Activated naive CD4-positive, alpha-beta T cell treated with anti-CD3 and anti-CD28 coated beads for 36 hours (primary cell): ENCODE measurements at regions of chr19 and their contacts with region 1.

Region 1: GRCh38 chr19:16185123-16185767 is at the start of gene FAM32A:
- DNase-seq: peak; percentile 100
- H3K4me3 Mint-ChIP-seq: peak within 1 kb of the TSS; percentile 98
- H3K27ac Mint-ChIP-seq: peak within 1 kb of the TSS; percentile 95
- H3K4me1 Mint-ChIP-seq: peaks cover 32% of the 10 kb centered on the region
- H3K27me3 Mint-ChIP-seq: no peaks in the 10 kb centered on the region
- total RNA-seq, gene FAM32A: 38.2 to 41.9 TPM

Region 2: DNA sequence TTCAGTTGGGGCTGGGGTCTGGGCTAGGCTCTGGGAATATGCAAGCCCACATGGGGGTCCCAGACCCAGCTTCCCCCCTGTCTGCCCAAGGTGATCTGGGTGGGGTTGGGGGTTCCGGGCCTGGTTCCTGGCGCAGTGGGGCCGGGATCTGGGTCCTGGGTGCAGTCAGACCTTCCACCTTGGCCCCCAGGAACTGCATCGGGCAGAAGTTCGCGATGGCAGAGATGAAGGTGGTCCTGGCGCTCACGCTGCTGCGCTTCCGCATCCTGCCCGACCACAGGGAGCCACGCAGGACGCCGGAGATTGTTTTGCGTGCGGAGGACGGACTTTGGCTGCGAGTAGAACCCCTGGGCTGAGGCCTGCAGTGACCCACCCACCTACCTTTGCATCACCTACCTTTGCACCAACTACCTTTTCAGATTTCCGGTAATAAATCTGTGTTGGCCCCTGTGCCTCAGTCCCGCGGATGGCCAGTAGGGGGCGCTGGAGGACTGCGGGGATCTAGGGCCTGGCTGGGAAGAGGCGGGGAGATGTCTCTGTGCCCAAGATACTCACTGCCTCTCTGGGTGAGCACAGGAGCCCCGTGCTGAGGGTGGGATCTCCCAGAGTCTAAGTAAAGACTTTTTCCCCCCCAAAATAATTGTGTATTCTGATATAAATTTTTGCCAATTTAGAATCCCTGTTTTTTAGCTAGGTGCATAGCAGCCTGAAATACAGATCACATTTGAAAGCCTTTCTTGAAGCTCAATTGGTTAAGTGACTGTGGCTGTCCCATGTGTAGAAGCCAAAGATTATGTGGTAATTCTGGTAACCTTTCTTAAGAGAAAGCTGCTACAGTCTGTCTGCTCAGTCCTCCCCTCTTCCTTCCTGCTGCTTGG is 556.0 kb before region 1 on chr19:
- CTCF ChIA-PET with region 1: interaction called, 6 read pairs
- intact Hi-C with region 1: loop called (anchors 1 kb)
- DNase-seq: peak; percentile 93
- H3K4me3 Mint-ChIP-seq: no peak overlapping the region
- H3K27ac Mint-ChIP-seq: no peak overlapping the region
- H3K4me1 Mint-ChIP-seq: no peaks in the 10 kb centered on the region
- H3K27me3 Mint-ChIP-seq: peaks cover 6% of the 10 kb centered on the region

Region 3: DNA sequence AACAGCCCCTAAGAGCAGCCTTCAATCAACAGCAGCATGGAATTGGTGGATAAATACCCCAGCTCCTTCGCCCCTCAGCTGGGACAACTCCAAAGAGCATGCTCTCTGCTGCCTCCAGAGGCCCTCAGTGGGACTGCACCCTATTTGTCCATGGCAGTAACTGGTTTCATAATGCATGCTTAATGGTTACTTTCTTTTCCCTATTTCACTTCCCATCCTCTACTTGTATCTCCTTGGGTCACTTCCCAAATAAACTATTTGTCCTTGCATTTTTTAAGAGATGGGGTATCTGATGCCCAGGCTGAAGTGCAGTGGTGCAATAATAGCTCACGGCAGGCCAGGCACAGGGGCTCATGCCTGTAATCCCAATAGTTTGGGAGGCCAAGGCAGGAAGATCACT is 122.5 kb before region 1 on chr19:
- CTCF ChIA-PET with region 1: interaction called, 12 read pairs
- intact Hi-C with region 1: loop called (anchors 1 kb)
- DNase-seq: peak; percentile 84
- H3K4me3 Mint-ChIP-seq: no peak overlapping the region
- H3K27ac Mint-ChIP-seq: no peak overlapping the region
- H3K4me1 Mint-ChIP-seq: peaks cover 20% of the 10 kb centered on the region
- H3K27me3 Mint-ChIP-seq: no peaks in the 10 kb centered on the region

Region 4: DNA sequence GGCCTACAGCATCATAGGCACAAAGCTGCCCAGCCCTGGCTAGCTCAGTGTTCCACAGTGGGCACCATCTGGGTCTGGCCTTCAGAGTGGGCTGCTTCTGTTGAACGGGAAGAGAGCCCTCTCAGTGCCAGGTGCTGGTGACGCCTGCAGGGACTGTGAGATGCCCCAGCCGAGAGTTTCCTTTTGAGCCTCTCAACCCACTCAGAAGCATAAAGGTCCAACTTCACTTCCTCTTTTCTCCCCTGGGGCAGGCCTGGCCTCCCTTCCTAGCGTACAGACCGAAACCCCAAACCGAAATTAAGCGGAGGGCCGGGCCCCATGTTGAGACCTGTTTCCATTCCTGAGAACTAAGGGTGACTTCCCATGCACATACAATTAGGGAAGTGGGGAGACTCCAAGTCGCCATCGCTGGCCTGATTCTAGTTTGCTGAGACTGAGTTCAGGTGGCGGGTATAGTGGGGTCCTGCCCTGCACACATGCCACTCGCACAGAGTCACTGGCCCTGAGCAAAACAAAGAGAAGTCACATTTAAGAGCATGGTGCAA is 66.7 kb before region 1 on chr19:
- CTCF ChIA-PET with region 1: interaction called, 10 read pairs
- intact Hi-C with region 1: no loop called
- DNase-seq: peak; percentile 45
- H3K4me3 Mint-ChIP-seq: no peak overlapping the region
- H3K27ac Mint-ChIP-seq: peak overlapping the region; percentile 82
- H3K4me1 Mint-ChIP-seq: peaks cover 54% of the 10 kb centered on the region
- H3K27me3 Mint-ChIP-seq: no peaks in the 10 kb centered on the region

Region 5: DNA sequence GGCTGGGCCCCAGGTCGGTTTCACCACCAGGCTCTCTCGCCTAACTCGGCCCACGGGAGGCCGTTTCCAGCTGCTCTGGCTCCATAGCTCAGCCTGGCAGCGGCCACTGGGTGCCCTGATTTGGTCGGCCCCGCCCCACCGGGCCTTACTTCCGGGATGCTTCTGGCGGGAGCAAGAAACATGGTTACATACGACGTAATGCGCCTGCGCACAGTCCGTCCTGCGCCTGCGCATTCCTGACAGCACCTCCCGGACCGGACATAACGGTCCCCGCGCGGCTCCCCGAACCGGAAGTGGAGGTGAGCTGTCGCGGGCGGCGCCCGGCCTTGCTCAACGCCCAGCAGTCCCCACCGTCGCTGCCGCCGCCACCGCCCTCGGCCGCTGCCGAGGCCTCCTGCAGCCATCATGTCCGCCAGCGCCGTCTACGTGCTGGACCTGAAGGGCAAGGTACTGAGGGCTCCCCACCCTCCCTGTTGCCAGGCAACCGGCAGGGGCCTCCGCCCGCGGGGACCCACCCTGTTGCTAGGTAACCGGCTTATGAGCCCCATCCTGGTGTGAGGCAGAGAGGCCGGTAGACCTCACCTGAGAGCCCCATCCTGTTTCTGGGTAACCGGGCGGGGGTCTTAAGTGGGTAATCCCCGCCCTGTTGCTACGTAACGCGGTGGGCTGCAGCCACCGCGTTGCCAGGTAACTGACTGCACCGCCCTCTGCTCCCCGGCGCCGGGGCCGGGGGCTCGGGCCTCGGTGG is 12.6 kb after region 1 on chr19 and contains the start of gene AP1M1:
- CTCF ChIA-PET with region 1: interaction called, 30 read pairs
- intact Hi-C with region 1: loop called (anchors 1 kb)
- DNase-seq: peak; percentile 99
- H3K4me3 Mint-ChIP-seq: peak within 1 kb of the TSS; percentile 93
- H3K27ac Mint-ChIP-seq: peak within 1 kb of the TSS; percentile 93
- H3K4me1 Mint-ChIP-seq: peaks cover 37% of the 10 kb centered on the region
- H3K27me3 Mint-ChIP-seq: no peaks in the 10 kb centered on the region
- total RNA-seq, gene AP1M1: 113 to 123 TPM

Region 6: DNA sequence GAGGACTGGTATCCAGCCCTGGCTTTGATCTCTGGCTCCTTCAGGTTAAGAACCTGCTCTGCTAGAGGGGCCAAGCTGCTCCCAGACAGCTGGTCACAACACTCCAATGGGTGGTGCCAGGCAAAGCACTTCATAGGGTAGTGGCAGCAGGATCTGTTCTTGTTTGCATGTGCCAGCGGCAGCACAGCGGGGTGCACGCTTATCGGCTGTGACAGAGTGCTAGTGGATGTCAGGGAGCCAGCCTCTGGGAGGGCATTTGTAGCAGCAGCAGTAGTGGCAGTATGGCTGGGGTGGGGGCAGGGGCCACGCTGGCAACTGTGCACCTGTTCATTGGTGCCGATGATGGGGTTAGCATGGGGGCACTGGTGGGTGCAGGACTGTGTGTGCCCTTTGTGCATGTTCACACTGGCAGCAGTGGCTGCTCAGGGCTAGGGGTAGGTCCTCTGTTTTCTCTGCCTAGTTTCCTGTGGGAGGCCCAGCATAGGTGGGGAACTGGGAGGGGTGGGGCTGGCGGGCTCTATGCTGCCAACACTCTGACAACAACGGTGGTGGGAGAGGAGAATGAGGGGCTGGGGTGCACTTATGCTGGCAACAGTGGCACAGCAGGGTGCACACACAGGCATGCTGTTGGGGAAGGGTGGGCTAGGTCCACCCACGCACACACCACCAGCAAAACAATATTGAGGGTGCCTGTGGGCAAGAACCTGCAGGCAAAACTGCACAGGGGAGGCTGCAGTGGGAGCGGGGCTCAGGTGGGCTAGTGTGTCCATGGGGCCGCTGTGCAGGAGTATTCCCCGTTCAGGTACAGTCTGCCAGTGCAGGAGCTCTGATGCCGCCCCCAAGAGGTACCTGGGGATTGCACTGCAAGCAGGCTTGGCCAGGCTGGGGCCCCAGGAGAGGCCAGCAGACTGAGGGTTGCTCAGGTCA is 31.8 kb after region 1 on chr19:
- CTCF ChIA-PET with region 1: no interaction called
- intact Hi-C with region 1: no loop called
- DNase-seq: peak; percentile 27
- H3K4me3 Mint-ChIP-seq: peak overlapping the region; percentile 1
- H3K27ac Mint-ChIP-seq: peak overlapping the region; percentile 42
- H3K4me1 Mint-ChIP-seq: peaks cover 62% of the 10 kb centered on the region
- H3K27me3 Mint-ChIP-seq: no peaks in the 10 kb centered on the region

Region 7: GRCh38 chr19:16252459-16253205 is 67.4 kb after region 1 on chr19:
- CTCF ChIA-PET with region 1: no interaction called
- intact Hi-C with region 1: no loop called
- DNase-seq: no peak
- H3K4me3 Mint-ChIP-seq: no peak overlapping the region
- H3K27ac Mint-ChIP-seq: no peak overlapping the region
- H3K4me1 Mint-ChIP-seq: peaks cover 1% of the 10 kb centered on the region
- H3K27me3 Mint-ChIP-seq: no peaks in the 10 kb centered on the region